IMR-90 (cell line): ENCODE measurements at regions of chr10 and their contacts with region 1.

Region 1: DNA sequence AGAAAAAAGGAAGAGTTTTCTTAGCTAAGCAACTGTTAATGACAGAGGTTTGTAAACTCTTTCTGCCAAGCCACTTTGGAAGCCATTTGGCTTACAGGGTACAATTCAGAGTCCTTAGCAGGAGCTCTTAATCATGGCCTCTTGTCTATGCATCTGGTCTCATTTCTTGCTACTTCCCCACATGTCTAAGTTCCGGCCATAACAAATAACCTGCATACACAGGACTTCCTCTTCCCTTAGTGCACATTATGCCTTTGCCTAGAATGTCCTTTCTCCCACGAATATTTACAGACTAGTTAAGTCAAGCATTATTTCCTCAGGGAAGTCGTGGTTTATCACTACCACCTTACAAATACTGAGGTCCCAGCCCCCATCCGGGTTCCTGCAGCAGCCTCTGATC is 8.6 kb upstream of the UPF2 start:
- DNase-seq: no peak
- ATAC-seq: no peak
- H3K4me3 ChIP-seq: no peak overlapping the region
- H3K27ac ChIP-seq: no peak overlapping the region
- H3K4me1 ChIP-seq: no peaks in the 10 kb centered on the region
- H3K27me3 ChIP-seq: no peaks in the 10 kb centered on the region
- CTCF ChIP-seq: no peak
- POLR2A ChIP-seq: no peak
- RAD21 ChIP-seq: no peak

Region 2: GRCh38 chr10:11678074-11678793 is 373.0 kb before region 1 on chr10:
- CTCF ChIA-PET with region 1: no interaction called
- POLR2A ChIA-PET with region 1: no interaction called
- dilution Hi-C with region 1: no loop called
- in situ Hi-C with region 1: no loop called
- intact Hi-C with region 1: no loop called
- DNase-seq: no peak
- ATAC-seq: no peak
- H3K4me3 ChIP-seq: no peak overlapping the region
- H3K27ac ChIP-seq: no peak overlapping the region
- H3K4me1 ChIP-seq: no peaks in the 10 kb centered on the region
- H3K27me3 ChIP-seq: peaks cover 39% of the 10 kb centered on the region
- CTCF ChIP-seq: no peak
- POLR2A ChIP-seq: no peak
- RAD21 ChIP-seq: no peak

Region 3: GRCh38 chr10:12091421-12091820 is 40.2 kb after region 1 on chr10:
- CTCF ChIA-PET with region 1: interaction called, 11 read pairs
- POLR2A ChIA-PET with region 1: no interaction called
- dilution Hi-C with region 1: no loop called
- in situ Hi-C with region 1: no loop called
- intact Hi-C with region 1: no loop called
- DNase-seq: no peak
- ATAC-seq: no peak
- H3K4me3 ChIP-seq: no peak overlapping the region
- H3K27ac ChIP-seq: no peak overlapping the region
- H3K4me1 ChIP-seq: no peaks in the 10 kb centered on the region
- H3K27me3 ChIP-seq: no peaks in the 10 kb centered on the region
- CTCF ChIP-seq: no peak
- POLR2A ChIP-seq: no peak
- RAD21 ChIP-seq: no peak